Activated CD4-positive, alpha-beta memory T cell treated with anti-CD3 and anti-CD28 coated beads for 36 hours (primary cell): ENCODE measurements at regions of chr4 and their contacts with region 1.

Region 1: DNA sequence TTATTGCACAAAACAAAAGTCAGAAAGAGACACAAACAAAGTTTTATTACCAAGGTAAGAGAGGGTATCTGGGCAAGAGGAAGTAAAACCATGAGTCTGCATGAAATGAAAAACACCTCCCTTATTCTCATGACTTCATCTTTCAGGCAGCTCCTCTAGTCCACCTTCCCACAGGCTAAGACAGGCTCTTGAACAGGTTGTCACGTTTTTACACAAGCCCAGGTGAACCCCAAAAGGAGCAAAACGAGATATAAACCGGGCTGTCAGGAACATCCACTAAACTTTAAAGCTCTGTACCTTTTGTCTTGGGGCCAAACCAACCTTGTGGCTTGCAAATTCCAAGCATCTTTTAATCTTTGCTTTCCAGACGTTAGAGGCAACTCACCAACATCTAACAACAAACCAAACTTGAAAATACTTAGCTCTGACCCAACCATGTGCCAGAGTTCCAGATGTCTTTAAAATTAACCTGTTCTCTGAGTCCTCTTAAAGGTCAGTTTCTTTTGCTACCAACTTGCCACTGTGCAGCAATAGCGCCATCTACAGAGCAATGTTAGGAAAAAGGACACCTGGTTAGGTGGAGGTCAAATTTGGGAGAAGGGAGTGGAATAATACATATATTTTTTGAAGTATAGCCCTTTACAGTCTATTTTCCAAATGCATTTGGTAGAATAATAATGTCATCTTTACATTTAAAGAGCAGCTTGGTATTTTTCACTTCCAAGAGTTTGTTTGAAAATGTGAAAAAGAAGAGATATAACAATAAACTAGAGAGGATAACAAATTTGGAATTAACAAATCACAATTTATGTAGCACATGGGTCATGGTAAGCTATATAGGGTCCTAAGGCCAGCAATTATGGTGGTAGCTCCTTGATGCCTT is 73.1 kb downstream of the QRFPR start:
- DNase-seq: peak; percentile 58
- H3K4me3 Mint-ChIP-seq: peak overlapping the region; percentile 7
- H3K27ac Mint-ChIP-seq: peak overlapping the region; percentile 75
- H3K4me1 Mint-ChIP-seq: peaks cover 18% of the 10 kb centered on the region
- H3K27me3 Mint-ChIP-seq: no peaks in the 10 kb centered on the region

Region 2: GRCh38 chr4:120156120-120156718 is 1151.5 kb before region 1 on chr4:
- CTCF ChIA-PET with region 1: interaction called, 12 read pairs
- POLR2A ChIA-PET with region 1: no interaction called
- intact Hi-C with region 1: loop called (anchors 5 kb)
- DNase-seq: no peak
- H3K4me3 Mint-ChIP-seq: no peak overlapping the region
- H3K27ac Mint-ChIP-seq: no peak overlapping the region
- H3K4me1 Mint-ChIP-seq: no peaks in the 10 kb centered on the region
- H3K27me3 Mint-ChIP-seq: no peaks in the 10 kb centered on the region

Region 3: DNA sequence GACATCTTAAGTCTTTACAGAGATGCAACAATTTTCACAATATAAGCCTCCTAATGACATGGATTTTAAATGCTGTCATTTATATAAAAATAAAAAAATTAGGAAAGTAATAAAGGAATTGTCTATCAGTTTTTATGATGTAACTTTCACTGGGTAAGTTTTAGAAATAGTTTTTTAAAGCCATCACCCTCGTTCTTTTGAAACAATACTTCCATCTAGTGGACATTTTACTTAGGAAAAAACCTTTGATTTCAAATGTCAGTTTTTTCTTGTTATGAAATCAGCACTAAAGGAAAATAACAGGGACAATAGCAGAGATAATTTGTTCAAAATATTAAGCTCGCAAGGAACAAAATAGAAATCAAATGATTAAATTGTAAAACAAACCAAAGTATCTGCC is 211.1 kb before region 1 on chr4:
- CTCF ChIA-PET with region 1: interaction called, 3 read pairs
- POLR2A ChIA-PET with region 1: no interaction called
- intact Hi-C with region 1: loop called (anchors 5 kb)
- DNase-seq: no peak
- H3K4me3 Mint-ChIP-seq: no peak overlapping the region
- H3K27ac Mint-ChIP-seq: no peak overlapping the region
- H3K4me1 Mint-ChIP-seq: no peaks in the 10 kb centered on the region
- H3K27me3 Mint-ChIP-seq: no peaks in the 10 kb centered on the region

Region 4: DNA sequence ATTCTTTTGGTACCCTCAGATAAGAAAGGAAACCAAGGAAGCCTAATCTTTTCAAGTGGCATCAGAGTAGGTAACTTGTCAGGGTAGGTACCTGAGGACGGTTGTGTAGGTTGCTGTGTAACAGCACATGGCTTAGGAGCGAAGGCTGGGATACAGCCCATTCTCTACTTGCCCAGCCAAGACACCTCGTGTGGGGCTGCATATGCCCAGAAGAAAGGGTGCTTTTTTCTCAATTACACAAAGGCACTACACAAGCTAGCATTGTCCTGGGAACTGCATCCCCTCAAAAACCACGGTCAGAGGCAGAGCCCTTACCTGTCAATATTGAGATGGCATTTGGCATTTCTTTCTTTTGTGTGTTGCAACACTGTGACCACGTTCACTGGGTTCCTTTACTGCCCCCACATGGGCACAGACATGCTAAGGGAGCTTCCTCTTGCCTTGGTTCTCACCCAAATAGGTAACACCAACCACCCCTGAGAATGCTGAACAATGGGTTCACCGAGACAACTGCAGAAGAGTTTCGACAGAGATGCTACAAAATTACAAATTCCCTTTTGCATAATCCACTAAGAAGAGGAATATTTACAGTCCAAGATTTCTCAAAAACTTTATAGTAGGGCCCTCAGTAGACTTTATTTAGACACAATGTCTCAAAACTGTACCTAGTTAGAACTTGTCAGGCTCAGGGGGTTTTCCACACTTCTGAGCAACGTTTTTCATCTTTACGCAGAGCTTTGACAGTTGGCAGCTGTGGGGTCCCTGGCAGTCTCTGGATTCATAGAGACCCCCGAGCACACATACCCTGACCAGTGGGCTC is 107.7 kb before region 1 on chr4:
- CTCF ChIA-PET with region 1: interaction called, 38 read pairs
- POLR2A ChIA-PET with region 1: no interaction called
- intact Hi-C with region 1: no loop called
- DNase-seq: peak; percentile 66
- H3K4me3 Mint-ChIP-seq: peak overlapping the region; percentile 10
- H3K27ac Mint-ChIP-seq: peak overlapping the region; percentile 60
- H3K4me1 Mint-ChIP-seq: peaks cover 34% of the 10 kb centered on the region
- H3K27me3 Mint-ChIP-seq: no peaks in the 10 kb centered on the region

Region 5: GRCh38 chr4:121277624-121278023 is 30.1 kb before region 1 on chr4:
- CTCF ChIA-PET with region 1: interaction called, 25 read pairs
- POLR2A ChIA-PET with region 1: interaction called, 3 read pairs
- intact Hi-C with region 1: loop called (anchors 2 kb)
- DNase-seq: no peak
- H3K4me3 Mint-ChIP-seq: no peak overlapping the region
- H3K27ac Mint-ChIP-seq: no peak overlapping the region
- H3K4me1 Mint-ChIP-seq: peaks cover 28% of the 10 kb centered on the region
- H3K27me3 Mint-ChIP-seq: peaks cover 10% of the 10 kb centered on the region

Region 6: DNA sequence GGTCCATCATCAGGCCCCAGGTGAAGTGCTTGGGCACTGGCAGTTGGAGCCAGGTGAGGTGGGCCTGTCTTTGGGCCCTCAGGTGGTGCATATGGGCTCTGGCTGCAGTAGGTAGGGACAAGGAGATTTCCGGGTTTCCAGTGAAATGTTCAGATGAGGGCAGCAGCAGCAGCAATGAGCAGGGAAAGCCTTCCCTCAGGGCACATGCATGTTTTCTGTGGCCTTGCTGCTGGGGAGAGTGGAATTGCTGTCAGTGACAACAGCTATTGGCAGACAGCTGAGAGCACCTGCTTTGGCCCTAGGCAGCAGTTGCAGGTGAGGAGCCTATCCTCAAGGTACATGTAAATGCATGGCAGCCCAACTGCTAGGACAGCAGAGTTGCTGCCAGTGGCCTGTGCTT is 132.0 kb after region 1 on chr4:
- CTCF ChIA-PET with region 1: no interaction called
- POLR2A ChIA-PET with region 1: no interaction called
- intact Hi-C with region 1: no loop called
- DNase-seq: no peak
- H3K4me3 Mint-ChIP-seq: no peak overlapping the region
- H3K27ac Mint-ChIP-seq: no peak overlapping the region
- H3K4me1 Mint-ChIP-seq: no peaks in the 10 kb centered on the region
- H3K27me3 Mint-ChIP-seq: peaks cover 12% of the 10 kb centered on the region